ENCODE measurements at regions of chr7 and their contacts with region 1.

Region 1: GRCh38 chr7:101990811-101991418 is 173.5 kb downstream of the CUX1 start:
- DNase-seq: no peak
- ATAC-seq: no peak
- H3K4me3 ChIP-seq: no peak overlapping the region
- H3K27ac ChIP-seq: peak overlapping the region in 1 of 10 donors; percentile 4
- H3K4me1 ChIP-seq: peaks cover under 1 to 12% (median 8%) of the 10 kb centered on the region in 9 donors
- H3K27me3 ChIP-seq: no peaks in the 10 kb centered on the region
- CTCF ChIP-seq: no peak

Region 2: DNA sequence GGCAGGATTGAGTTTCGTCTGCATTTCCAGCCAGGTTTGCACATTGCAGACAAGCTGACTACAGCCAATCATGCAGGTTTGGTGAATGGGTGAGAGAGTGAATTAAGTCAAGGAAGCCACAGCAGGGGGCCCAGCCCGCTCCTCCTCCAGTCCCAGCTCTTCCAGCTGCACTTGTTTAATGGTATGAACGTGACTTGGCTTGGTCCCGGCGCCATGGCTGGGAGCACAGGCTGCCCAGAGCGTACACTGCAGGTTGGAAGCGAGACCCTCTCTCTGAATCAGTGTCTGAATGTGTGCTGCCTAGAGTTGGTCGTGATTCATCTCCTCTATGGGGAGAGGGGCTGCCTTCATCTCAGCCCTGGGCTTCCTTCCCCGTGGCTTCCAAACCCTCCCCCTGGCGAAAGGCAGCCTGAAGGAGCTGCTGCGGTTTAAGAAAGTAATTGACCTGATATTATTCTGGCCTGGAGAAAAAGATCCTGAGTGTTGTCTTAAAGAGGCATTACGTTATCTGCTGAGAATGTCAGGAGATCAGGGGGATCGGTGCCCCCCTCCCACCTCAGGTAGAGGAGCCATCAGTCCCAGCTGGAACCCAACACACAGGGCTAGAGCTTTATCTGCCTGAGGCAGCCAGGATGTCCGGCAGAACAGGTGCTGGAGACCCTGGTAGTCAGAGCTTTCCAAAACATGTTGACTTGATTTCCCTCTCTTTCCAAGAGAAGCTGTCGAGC is 496.1 kb before region 1 on chr7:
- intact Hi-C with region 1: no loop called
- DNase-seq: no peak
- ATAC-seq: no peak
- H3K4me3 ChIP-seq: no peak overlapping the region
- H3K27ac ChIP-seq: no peak overlapping the region
- H3K4me1 ChIP-seq: no peaks in the 10 kb centered on the region
- H3K27me3 ChIP-seq: peaks cover 0 to 44% (median 14%) of the 10 kb centered on the region in 7 donors
- CTCF ChIP-seq: no peak

Region 3: GRCh38 chr7:102024769-102025391 is 34.0 kb after region 1 on chr7:
- intact Hi-C with region 1: loop called in 1 of 10 experiments (anchors 5 kb)
- DNase-seq: peak; percentile 19 to 22
- ATAC-seq: peak; percentile 65 to 92 (median 78)
- H3K4me3 ChIP-seq: no peak overlapping the region
- H3K27ac ChIP-seq: peak overlapping the region; percentile 34 to 84 (median 74)
- H3K4me1 ChIP-seq: peaks cover 0 to 21% (median 12%) of the 10 kb centered on the region in 9 donors
- H3K27me3 ChIP-seq: no peaks in the 10 kb centered on the region
- CTCF ChIP-seq: no peak

Region 4: DNA sequence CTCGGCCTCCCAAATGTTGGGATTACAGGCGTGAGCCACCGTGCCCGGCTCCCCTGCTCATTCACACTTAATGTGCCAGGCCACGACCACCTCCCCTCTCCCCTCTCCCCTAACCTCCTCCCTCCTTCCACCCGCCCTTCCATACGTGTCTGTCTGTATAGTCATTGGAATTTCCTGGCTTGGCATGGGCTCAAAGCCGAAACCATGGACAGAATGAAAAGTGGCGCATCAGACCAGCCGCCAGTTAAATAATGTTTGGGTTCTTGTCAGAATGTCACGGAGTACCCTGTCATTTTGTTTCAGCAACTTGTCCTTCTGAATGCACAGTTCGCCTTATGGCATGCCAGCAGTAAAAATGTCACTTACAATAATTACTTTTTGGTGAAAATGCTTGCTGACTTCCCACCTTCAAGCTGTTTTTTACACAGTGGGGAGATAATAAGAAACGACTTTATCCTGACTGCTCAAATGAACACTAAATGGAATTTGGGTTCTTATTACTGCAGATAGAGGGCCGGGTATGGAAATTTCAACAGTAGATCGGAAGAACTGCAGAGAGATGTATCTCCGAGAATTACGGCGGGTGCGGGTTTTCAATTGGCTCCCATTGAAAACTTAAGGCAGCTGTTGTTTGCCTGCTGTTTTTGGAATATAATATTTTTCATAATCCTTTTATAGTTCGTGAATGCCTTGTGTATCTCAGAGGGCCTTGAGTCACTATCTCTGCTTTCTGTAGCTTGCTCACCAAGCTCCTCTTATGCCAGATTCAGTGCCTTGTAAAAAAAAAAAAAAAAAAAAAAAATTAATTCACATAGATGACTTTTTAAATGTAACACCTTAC is 230.3 kb after region 1 on chr7:
- intact Hi-C with region 1: loop called in 1 of 10 experiments (anchors 10 kb)
- DNase-seq: no peak
- ATAC-seq: no peak
- H3K4me3 ChIP-seq: no peak overlapping the region
- H3K27ac ChIP-seq: no peak overlapping the region
- H3K4me1 ChIP-seq: no peaks in the 10 kb centered on the region
- H3K27me3 ChIP-seq: no peaks in the 10 kb centered on the region
- CTCF ChIP-seq: no peak

Measured in heart right ventricle (tissue), 16 donors.